ENCODE measurements at regions of chr9 and their contacts with region 1.

Region 1: DNA sequence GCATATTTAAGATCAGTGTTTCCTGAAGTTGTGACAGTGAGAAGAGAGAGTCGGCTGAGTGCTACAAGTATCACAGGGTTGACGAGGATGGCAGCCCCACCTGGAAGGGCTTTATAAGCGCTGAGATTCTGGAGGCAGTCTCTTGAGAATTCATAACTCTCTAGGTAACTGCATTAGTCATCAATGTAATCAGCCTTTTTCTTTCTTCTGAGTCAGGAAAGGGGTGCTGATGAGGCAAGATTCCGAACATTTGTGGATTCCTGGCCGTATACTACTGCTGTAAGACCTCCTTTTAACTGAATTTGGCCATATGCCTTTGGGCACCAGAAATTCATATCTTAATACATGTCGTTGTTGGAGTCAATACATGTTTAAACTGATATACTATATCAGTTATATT is 6.6 kb upstream of the RNF20 start:
- DNase-seq: no peak
- ATAC-seq: no peak
- H3K4me3 ChIP-seq: no peak overlapping the region
- H3K27ac ChIP-seq: no peak overlapping the region
- H3K4me1 ChIP-seq: no peaks in the 10 kb centered on the region
- H3K27me3 ChIP-seq: no peaks in the 10 kb centered on the region
- CTCF ChIP-seq: no peak

Region 2: GRCh38 chr9:101462558-101462957 is 64.5 kb before region 1 on chr9:
- intact Hi-C with region 1: loop called in 2 of 3 experiments (anchors 5 kb)
- DNase-seq: no peak
- ATAC-seq: no peak
- H3K4me3 ChIP-seq: no peak overlapping the region
- H3K27ac ChIP-seq: no peak overlapping the region
- H3K4me1 ChIP-seq: no peaks in the 10 kb centered on the region
- H3K27me3 ChIP-seq: peaks cover 0 to 7% (median 0%) of the 10 kb centered on the region in 4 donors
- CTCF ChIP-seq: no peak

Region 3: GRCh38 chr9:101479338-101480030 is 47.6 kb before region 1 on chr9:
- intact Hi-C with region 1: loop called in 1 of 3 experiments (anchors 10 kb)
- DNase-seq: peak in 3 of 6 donors; percentile 22 to 41 (median 29)
- ATAC-seq: peak; percentile 77 to 87 (median 81)
- H3K4me3 ChIP-seq: no peak overlapping the region
- H3K27ac ChIP-seq: no peak overlapping the region
- H3K4me1 ChIP-seq: peaks cover 4 to 29% (median 5%) of the 10 kb centered on the region in 3 donors
- H3K27me3 ChIP-seq: no peaks in the 10 kb centered on the region
- CTCF ChIP-seq: no peak